ENCODE measurements at regions of chr15 and their contacts with region 1.

Region 1: DNA sequence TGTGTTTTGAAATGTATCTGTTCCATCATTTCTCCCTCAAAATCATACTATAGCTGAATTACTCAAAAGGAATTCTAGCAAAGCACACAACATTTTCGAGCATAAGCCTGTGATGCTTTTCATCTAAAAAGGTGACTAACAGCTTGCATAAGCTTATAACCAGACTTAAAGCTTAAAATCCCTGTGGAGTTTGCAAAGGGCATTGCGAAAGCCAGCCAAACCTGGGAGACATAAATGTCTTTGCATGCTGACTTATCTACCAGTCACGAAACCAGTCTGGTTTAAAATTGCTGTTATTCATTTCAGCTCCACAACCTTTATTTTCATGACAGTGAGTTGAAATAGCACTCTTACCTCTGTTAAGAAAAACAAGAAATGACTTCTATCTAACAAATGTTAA is 35.6 kb upstream of the LIPC start:
- DNase-seq: peak; percentile 35 to 90
- H3K4me3 ChIP-seq: no peak overlapping the region
- H3K27ac ChIP-seq: peak overlapping the region; percentile 79
- H3K4me1 ChIP-seq: peaks cover 65% of the 10 kb centered on the region
- H3K27me3 ChIP-seq: no peaks in the 10 kb centered on the region
- CTCF ChIP-seq: no peak

Region 2: GRCh38 chr15:58269455-58270414 is 126.4 kb before region 1 on chr15:
- CTCF ChIA-PET with region 1: interaction called, 3 read pairs
- POLR2A ChIA-PET with region 1: interaction called, 5 read pairs
- intact Hi-C with region 1: loop called (anchors 1 kb)
- DNase-seq: peak; percentile 44 to 62
- H3K4me3 ChIP-seq: no peak overlapping the region
- H3K27ac ChIP-seq: peak overlapping the region; percentile 39
- H3K4me1 ChIP-seq: peaks cover 34% of the 10 kb centered on the region
- H3K27me3 ChIP-seq: no peaks in the 10 kb centered on the region
- CTCF ChIP-seq: peak; percentile 74

Region 3: DNA sequence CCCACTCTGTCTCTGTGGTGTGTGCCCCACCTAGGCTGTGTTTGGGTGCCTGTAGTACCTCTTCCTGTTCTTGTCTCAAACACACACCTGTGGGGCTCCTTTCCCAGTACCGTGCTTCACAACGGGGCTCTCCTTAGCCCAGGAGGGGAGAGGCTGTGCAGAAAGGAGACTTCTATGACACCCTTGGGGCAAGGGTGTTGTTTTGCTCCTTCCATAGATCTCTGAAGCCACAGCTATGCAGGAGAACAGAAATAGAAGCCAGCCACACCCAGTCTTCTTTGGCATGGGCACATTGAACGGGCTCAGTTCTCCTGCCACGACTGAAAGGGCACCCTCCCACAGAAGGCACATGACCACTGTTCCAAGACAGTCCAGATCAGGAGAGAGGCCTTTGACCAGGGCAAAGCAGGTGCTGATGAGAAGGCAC is 109.9 kb after region 1 on chr15:
- CTCF ChIA-PET with region 1: interaction called, 3 read pairs
- POLR2A ChIA-PET with region 1: interaction called, 3 read pairs
- intact Hi-C with region 1: loop called (anchors 1 kb)
- DNase-seq: peak; percentile 43 to 75
- H3K4me3 ChIP-seq: no peak overlapping the region
- H3K27ac ChIP-seq: 0 out of 2 replicates have a peak overlapping the region, but pooled peaks have one; percentile 40
- H3K4me1 ChIP-seq: peaks cover 17% of the 10 kb centered on the region
- H3K27me3 ChIP-seq: no peaks in the 10 kb centered on the region
- CTCF ChIP-seq: no peak

Region 4: DNA sequence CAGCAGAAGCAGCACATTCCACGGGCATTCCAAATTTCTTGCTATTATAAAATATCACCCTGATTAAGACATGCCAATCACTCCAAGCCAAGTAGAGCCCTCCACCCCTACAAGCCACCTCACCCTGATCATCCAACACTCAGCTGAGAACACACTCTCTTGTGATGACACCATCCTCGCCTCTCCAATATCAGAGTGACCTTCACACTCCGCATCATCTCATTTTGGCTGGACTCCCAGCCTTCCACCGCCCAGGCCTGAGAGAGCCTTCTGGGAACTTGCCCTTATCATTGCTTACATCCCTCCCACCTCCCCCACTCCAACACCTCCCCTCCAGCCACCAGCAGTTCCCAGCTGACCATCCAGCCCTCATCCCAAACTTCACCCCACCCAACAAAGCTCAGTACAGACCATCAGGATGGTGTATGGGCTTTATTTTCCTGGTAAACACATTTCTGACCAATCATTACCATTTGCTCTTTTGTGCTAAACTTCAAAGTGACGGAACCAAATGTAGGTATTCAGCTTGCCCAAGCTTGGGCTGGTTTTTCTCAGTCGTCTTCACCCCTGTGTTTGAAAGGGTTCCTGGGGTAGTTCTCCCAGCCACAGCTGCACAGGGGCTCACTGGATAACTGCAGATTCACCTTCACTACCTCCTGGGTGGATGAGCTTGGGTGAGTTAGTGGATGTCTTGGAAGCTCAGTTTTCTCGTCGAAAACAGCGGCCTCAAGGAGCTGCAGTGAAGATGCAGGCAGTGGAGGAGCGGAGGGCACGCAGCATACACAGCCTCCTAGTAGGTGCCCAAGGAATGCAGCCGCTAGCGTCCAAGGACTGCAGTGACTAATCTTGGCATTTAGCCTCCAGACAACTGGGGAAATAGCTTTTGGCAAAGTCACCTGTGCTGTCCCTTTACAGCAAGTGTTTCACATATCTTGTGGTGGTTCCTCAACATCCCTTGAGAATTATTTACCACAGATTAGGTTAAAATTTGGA is 150.8 kb after region 1 on chr15:
- CTCF ChIA-PET with region 1: no interaction called
- POLR2A ChIA-PET with region 1: interaction called, 3 read pairs
- intact Hi-C with region 1: loop called (anchors 1 kb)
- DNase-seq: peak; percentile 88 to 97
- H3K4me3 ChIP-seq: peak overlapping the region; percentile 43; the same call in 1 of the 2 replicates
- H3K27ac ChIP-seq: peak overlapping the region; percentile 97
- H3K4me1 ChIP-seq: peaks cover 50% of the 10 kb centered on the region
- H3K27me3 ChIP-seq: no peaks in the 10 kb centered on the region
- CTCF ChIP-seq: no peak

Region 5: GRCh38 chr15:58731756-58732535 is 335.8 kb after region 1 on chr15:
- CTCF ChIA-PET with region 1: no interaction called
- POLR2A ChIA-PET with region 1: interaction called, 16 read pairs
- intact Hi-C with region 1: no loop called
- DNase-seq: peak; percentile 44 to 53
- H3K4me3 ChIP-seq: no peak overlapping the region
- H3K27ac ChIP-seq: peak overlapping the region; percentile 46; the same call in 1 of the 2 replicates
- H3K4me1 ChIP-seq: peaks cover 10% of the 10 kb centered on the region
- H3K27me3 ChIP-seq: no peaks in the 10 kb centered on the region
- CTCF ChIP-seq: no peak